Naive thymus-derived CD4-positive, alpha-beta T cell (primary cell): ENCODE measurements at regions of chr1 and their contacts with region 1.

Region 1: GRCh38 chr1:151611832-151612500 is at the start of gene SNX27:
- DNase-seq: peak; percentile 76 to 94 (median 87)
- ATAC-seq: peak; percentile 95
- H3K4me3 ChIP-seq: peak within 1 kb of the TSS; percentile 80
- H3K4me3 Mint-ChIP-seq: peak within 1 kb of the TSS; percentile 89 to 100 (median 97)
- H3K27ac ChIP-seq: peak within 1 kb of the TSS; percentile 98
- H3K27ac Mint-ChIP-seq: peak within 1 kb of the TSS; percentile 88 to 98 (median 92)
- H3K4me1 ChIP-seq: peaks cover 11 to 18% of the 10 kb centered on the region in 2 donors
- H3K4me1 Mint-ChIP-seq: peaks cover 40 to 50% (median 45%) of the 10 kb centered on the region in 7 donors
- H3K27me3 ChIP-seq: no peaks in the 10 kb centered on the region
- H3K27me3 Mint-ChIP-seq: peaks cover 0 to 11% (median 6%) of the 10 kb centered on the region in 5 donors
- total RNA-seq, gene SNX27: 25.5 to 42.1 (median 41.0) TPM

Region 2: DNA sequence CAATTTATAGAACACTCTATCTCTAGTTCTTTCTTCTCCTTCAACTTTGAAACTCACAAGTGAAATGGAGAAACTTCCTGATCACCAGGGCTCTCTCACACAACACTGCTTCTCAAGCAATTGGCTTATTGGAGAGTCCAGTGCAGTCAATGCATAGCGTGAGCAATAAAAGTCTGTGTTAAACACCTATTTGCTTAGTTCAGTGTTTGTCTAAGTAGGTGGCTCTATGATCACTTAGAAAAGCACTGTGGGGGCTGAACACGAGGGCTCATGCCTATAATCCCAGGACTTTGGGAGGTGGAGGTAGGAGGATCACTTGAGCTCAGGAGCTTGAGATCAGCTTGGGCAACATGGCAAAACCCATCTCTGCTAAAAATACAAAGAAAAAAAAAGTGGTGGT is 858.5 kb before region 1 on chr1:
- CTCF ChIA-PET with region 1: no interaction called
- POLR2A ChIA-PET with region 1: no interaction called
- intact Hi-C with region 1: no loop called
- DNase-seq: no peak
- ATAC-seq: no peak
- H3K4me3 ChIP-seq: no peak overlapping the region
- H3K4me3 Mint-ChIP-seq: no peak overlapping the region
- H3K27ac ChIP-seq: no peak overlapping the region
- H3K27ac Mint-ChIP-seq: peak overlapping the region in 1 of 9 donors; percentile 32
- H3K4me1 ChIP-seq: no peaks in the 10 kb centered on the region
- H3K4me1 Mint-ChIP-seq: peaks cover 0 to 14% (median 0%) of the 10 kb centered on the region in 7 donors
- H3K27me3 ChIP-seq: no peaks in the 10 kb centered on the region
- H3K27me3 Mint-ChIP-seq: no peaks in the 10 kb centered on the region

Region 3: GRCh38 chr1:151281969-151282882 is 329.7 kb before region 1 on chr1 and contains the start of gene ZNF687:
- CTCF ChIA-PET with region 1: no interaction called
- POLR2A ChIA-PET with region 1: no interaction called
- intact Hi-C with region 1: loop called (anchors 1 to 5 kb)
- DNase-seq: peak; percentile 93 to 99 (median 99)
- ATAC-seq: peak; percentile 91
- H3K4me3 ChIP-seq: peak within 1 kb of the TSS; percentile 96
- H3K4me3 Mint-ChIP-seq: peak within 1 kb of the TSS; percentile 93 to 100 (median 97)
- H3K27ac ChIP-seq: peak within 1 kb of the TSS; percentile 87
- H3K27ac Mint-ChIP-seq: peak within 1 kb of the TSS; percentile 92 to 100 (median 96)
- H3K4me1 ChIP-seq: peaks cover 10 to 11% of the 10 kb centered on the region in 2 donors
- H3K4me1 Mint-ChIP-seq: peaks cover 20 to 42% (median 27%) of the 10 kb centered on the region in 7 donors
- H3K27me3 ChIP-seq: no peaks in the 10 kb centered on the region
- H3K27me3 Mint-ChIP-seq: no peaks in the 10 kb centered on the region
- total RNA-seq, gene ZNF687: 30.4 to 38.1 (median 32.3) TPM

Region 4: DNA sequence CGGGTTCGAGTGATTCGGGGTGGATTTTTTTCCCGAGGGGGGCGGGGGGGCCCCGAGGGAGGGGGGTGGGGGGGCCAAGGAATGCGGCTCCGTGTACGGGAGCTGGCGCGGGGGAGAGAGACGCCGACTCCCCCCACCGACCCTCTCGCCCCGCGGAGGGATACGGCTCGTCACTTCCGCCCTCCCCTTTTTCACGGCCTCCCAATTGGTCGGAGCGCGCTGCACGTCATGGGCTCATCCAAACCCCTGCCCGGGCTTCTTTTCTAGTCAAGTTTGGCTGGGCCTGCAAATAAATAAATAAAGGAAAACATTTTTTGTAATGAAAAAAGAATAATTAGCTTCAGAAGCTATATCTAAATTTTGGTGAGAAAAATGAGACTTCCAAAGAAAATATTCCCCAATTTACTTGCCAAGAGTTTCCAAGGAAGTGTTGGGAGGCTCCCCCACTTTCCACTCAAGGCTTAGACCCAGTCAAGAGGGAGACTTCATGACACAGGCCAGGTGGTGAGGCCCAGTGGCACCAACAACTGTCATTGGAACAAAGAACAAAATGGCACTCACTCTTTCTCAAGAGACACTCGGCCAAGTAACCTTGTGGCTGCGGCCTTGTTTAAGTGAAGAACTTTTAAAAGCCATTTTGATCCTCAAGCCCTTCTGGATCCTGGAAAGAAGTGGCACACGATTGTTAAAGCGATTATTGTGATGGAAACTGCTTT is 152.5 kb before region 1 on chr1 and contains the start of gene POGZ:
- CTCF ChIA-PET with region 1: no interaction called
- POLR2A ChIA-PET with region 1: no interaction called
- intact Hi-C with region 1: loop called (anchors 1 to 5 kb)
- DNase-seq: peak; percentile 80 to 94 (median 93)
- ATAC-seq: peak; percentile 87
- H3K4me3 ChIP-seq: peak within 1 kb of the TSS; percentile 73
- H3K4me3 Mint-ChIP-seq: peak within 1 kb of the TSS; percentile 87 to 100 (median 91)
- H3K27ac ChIP-seq: peak within 1 kb of the TSS; percentile 81
- H3K27ac Mint-ChIP-seq: peak within 1 kb of the TSS; percentile 91 to 97 (median 96)
- H3K4me1 ChIP-seq: peaks cover 8 to 12% of the 10 kb centered on the region in 2 donors
- H3K4me1 Mint-ChIP-seq: peaks cover 15 to 43% (median 34%) of the 10 kb centered on the region in 7 donors
- H3K27me3 ChIP-seq: no peaks in the 10 kb centered on the region
- H3K27me3 Mint-ChIP-seq: peaks cover 15 to 25% (median 18%) of the 10 kb centered on the region in 5 donors
- total RNA-seq, gene POGZ: 83.7 to 143 (median 112) TPM

Region 5: GRCh38 chr1:151720974-151721787 is 109.2 kb after region 1 on chr1 and contains the start of gene RIIAD1:
- CTCF ChIA-PET with region 1: no interaction called
- POLR2A ChIA-PET with region 1: no interaction called
- intact Hi-C with region 1: loop called in 1 of 2 experiments (anchors 1 kb)
- DNase-seq: peak in 8 of 9 donors; percentile 17 to 47 (median 40)
- ATAC-seq: peak; percentile 85
- H3K4me3 ChIP-seq: peak within 1 kb of the TSS; percentile 71
- H3K4me3 Mint-ChIP-seq: peak within 1 kb of the TSS; percentile 71 to 85 (median 83)
- H3K27ac ChIP-seq: no peak within 1 kb of the TSS
- H3K27ac Mint-ChIP-seq: peak within 1 kb of the TSS in 8 of 9 donors; percentile 11 to 85 (median 36)
- H3K4me1 ChIP-seq: peaks cover 9 to 14% of the 10 kb centered on the region in 2 donors
- H3K4me1 Mint-ChIP-seq: peaks cover 17 to 41% (median 26%) of the 10 kb centered on the region in 7 donors
- H3K27me3 ChIP-seq: peaks cover 4 to 6% of the 10 kb centered on the region in 2 donors
- H3K27me3 Mint-ChIP-seq: peaks cover 54 to 88% (median 65%) of the 10 kb centered on the region in 5 donors
- total RNA-seq, gene RIIAD1: not detected

Region 6: DNA sequence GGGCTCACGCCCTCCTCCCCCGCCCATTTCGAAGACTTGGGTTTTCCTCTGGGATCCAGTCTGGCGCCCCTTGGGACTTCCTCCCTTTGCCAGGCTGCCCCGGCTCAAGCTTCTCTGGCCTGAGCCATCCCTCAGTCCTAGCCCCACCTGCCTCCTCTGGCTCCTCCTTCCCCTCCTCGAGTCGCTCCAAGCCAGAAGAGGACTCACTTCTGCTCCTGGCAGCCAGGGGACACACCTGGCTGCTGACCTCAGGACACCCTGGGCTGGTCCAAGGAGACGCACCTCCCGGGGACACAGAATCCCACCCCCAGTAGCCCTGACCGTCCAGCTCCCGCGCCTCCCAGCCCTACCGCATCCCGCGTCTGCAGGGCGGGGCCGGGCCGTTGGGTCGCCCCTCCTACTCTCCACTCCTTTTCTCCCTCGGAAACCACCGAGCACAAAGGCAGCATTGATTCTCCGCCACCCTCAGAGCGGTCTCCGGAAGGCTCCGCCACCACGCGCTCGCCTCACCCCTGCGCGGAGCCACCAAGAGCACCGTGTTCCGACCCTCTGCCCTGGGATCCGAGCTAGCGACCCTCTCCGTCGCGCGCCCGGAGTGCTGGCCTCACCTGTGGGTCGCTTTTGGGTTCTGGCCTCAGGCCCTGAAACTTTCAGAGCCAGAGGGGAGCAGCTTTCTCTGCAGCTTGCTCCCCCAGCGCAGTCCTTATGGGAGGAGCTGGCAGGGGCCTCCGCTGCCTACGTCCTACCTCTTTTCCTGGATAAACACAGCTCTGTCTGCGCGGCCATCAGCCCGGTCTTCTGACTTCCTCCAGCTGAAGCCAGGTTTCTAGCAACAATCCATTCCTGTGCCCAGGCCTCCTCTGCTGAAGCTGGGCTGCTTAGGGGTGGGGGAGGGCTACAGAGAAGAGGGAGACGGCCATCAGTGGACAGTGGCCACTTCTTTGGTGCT is 227.8 kb after region 1 on chr1 and contains the start of gene C2CD4D:
- CTCF ChIA-PET with region 1: interaction called, 4 read pairs
- POLR2A ChIA-PET with region 1: no interaction called
- intact Hi-C with region 1: loop called (anchors 5 kb)
- DNase-seq: peak; percentile 42 to 77 (median 66)
- ATAC-seq: peak; percentile 89
- H3K4me3 ChIP-seq: peak within 1 kb of the TSS; percentile 68
- H3K4me3 Mint-ChIP-seq: peak within 1 kb of the TSS; percentile 68 to 89 (median 82)
- H3K27ac ChIP-seq: peak within 1 kb of the TSS; percentile 55
- H3K27ac Mint-ChIP-seq: peak within 1 kb of the TSS; percentile 31 to 87 (median 77)
- H3K4me1 ChIP-seq: peaks cover 27 to 38% of the 10 kb centered on the region in 2 donors
- H3K4me1 Mint-ChIP-seq: peaks cover 33 to 53% (median 40%) of the 10 kb centered on the region in 7 donors
- H3K27me3 ChIP-seq: no peaks in the 10 kb centered on the region
- H3K27me3 Mint-ChIP-seq: peaks cover 0 to 8% (median 0%) of the 10 kb centered on the region in 5 donors
- total RNA-seq, gene C2CD4D: 0.34 to 0.87 TPM in 2 of 5 experiments, not detected in the others

Region 7: DNA sequence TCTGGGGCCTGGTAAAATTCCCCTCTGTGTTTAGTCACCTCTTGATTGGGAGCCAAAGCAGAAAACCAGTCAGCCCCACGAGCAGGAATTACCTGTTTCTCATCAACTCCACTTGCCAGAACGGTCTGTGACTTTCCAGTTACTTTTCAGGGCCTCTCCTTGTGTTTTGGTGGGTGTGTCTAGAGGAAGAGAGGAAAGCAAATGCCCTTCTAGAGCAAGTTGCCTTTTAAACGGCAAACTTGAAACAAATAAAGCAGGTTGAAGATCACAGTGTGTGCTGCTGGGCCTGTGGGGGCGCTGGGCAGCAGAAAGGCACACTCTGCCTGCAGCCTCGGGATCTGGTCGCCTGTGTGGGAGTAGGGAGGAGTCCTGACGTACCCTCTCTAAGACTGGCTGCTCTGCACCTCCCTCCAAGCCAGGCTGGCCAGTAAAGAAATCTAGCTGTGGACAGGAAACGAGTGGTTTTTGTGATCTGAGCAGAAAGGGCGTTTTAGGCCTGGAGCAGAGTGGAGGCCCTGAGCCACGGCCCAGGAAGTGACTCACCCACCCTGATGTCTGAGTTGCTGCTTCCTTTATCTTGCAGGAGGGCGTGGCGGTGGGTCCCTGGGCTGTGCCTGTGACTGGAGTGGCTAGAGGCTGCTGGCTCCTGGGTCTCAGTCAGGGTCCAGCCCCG is 435.9 kb after region 1 on chr1:
- CTCF ChIA-PET with region 1: no interaction called
- POLR2A ChIA-PET with region 1: no interaction called
- intact Hi-C with region 1: loop called in 1 of 2 experiments (anchors 1 kb)
- DNase-seq: peak; percentile 57 to 82 (median 76)
- ATAC-seq: peak; percentile 93
- H3K4me3 ChIP-seq: peak overlapping the region; percentile 10
- H3K4me3 Mint-ChIP-seq: peak overlapping the region; percentile 56 to 87 (median 77)
- H3K27ac ChIP-seq: peak overlapping the region; percentile 81
- H3K27ac Mint-ChIP-seq: peak overlapping the region; percentile 92 to 98 (median 98)
- H3K4me1 ChIP-seq: peaks cover 19 to 21% of the 10 kb centered on the region in 2 donors
- H3K4me1 Mint-ChIP-seq: peaks cover 21 to 53% (median 30%) of the 10 kb centered on the region in 7 donors
- H3K27me3 ChIP-seq: no peaks in the 10 kb centered on the region
- H3K27me3 Mint-ChIP-seq: peaks cover 0 to 3% (median 0%) of the 10 kb centered on the region in 5 donors